Mammary epithelial cell (primary cell): ENCODE measurements at regions of chr2 and their contacts with region 1.

Region 1: DNA sequence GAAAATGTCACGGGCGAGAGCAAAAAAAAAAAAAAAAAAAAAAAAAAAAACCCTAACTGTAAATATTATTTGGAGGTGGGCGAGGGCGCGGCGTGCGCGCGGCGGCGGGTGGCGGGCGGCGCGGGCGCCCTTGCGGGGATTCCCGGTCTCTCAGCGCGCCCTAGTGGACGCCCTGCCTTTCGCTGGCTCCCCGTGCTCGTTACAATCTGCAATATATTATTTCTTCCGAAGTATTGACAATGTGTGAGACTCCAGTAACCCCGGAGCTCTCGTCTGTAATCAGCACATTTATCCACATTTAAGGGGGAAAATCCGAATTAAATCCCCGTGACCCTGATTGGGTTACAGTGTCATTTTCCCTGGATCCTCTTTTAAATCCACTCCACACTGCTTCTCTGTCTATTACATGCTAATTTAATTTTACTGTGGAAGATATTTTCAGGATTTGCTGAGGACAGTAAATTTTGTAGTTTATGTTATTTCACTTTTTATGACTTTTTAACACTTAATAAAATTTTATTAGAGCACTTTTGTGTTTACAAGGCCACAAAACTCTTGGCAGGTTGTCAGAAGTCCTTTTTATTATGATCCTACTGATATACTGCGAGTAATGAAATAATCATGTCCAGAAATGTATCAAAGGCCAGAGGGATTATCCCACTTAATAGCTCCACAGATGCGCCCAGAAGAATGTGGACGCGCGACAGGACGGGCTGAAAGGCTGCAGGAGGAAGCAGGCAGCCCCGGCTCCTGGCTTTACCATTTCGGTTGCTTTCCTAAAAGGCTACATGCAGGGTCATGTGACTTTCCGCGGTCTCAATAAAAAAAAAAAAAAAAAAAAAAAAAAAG is 369.1 kb downstream of the MTX2 start:
- DNase-seq: peak; percentile 43
- H3K4me3 ChIP-seq: peak overlapping the region; percentile 61 to 87 (median 81)
- H3K27ac ChIP-seq: peak overlapping the region; percentile 3
- H3K4me1 ChIP-seq: peaks cover 41% of the 10 kb centered on the region
- H3K27me3 ChIP-seq: peaks cover 3% of the 10 kb centered on the region
- CTCF ChIP-seq: peak; percentile 54 to 64

Region 2: GRCh38 chr2:176135034-176135440 is 503.4 kb before region 1 on chr2:
- CTCF ChIA-PET with region 1: no interaction called
- dilution Hi-C with region 1: loop called (anchors 10 kb)
- in situ Hi-C with region 1: no loop called
- intact Hi-C with region 1: loop called (anchors 1 kb)
- DNase-seq: no peak
- H3K4me3 ChIP-seq: no peak overlapping the region
- H3K27ac ChIP-seq: no peak overlapping the region
- H3K4me1 ChIP-seq: peaks cover 10% of the 10 kb centered on the region
- H3K27me3 ChIP-seq: peaks cover 59% of the 10 kb centered on the region
- CTCF ChIP-seq: peak in 1 of 2 donors; percentile 4

Region 3: GRCh38 chr2:176269319-176270099 is 368.9 kb before region 1 on chr2 and contains the start of gene MTX2:
- CTCF ChIA-PET with region 1: no interaction called
- dilution Hi-C with region 1: no loop called
- in situ Hi-C with region 1: no loop called
- intact Hi-C with region 1: loop called (anchors 1 kb)
- DNase-seq: peak; percentile 74
- H3K4me3 ChIP-seq: peak within 1 kb of the TSS; percentile 75 to 96 (median 81)
- H3K27ac ChIP-seq: peak within 1 kb of the TSS; percentile 71
- H3K4me1 ChIP-seq: peaks cover 8% of the 10 kb centered on the region
- H3K27me3 ChIP-seq: no peaks in the 10 kb centered on the region
- CTCF ChIP-seq: peak in 1 of 2 donors; percentile 33
- total RNA-seq, gene MTX2: 17.0 to 37.3 TPM

Region 4: GRCh38 chr2:176554101-176555048 is 84.0 kb before region 1 on chr2:
- CTCF ChIA-PET with region 1: interaction called, 13 read pairs
- dilution Hi-C with region 1: no loop called
- in situ Hi-C with region 1: no loop called
- intact Hi-C with region 1: loop called (anchors 1 kb)
- DNase-seq: peak; percentile 34
- H3K4me3 ChIP-seq: peak overlapping the region; percentile 49 to 54 (median 49)
- H3K27ac ChIP-seq: no peak overlapping the region
- H3K4me1 ChIP-seq: peaks cover 16% of the 10 kb centered on the region
- H3K27me3 ChIP-seq: peaks cover 8% of the 10 kb centered on the region
- CTCF ChIP-seq: peak; percentile 58 to 73

Region 5: GRCh38 chr2:176685911-176686310 is 47.5 kb after region 1 on chr2:
- CTCF ChIA-PET with region 1: no interaction called
- dilution Hi-C with region 1: no loop called
- in situ Hi-C with region 1: no loop called
- intact Hi-C with region 1: no loop called
- DNase-seq: no peak
- H3K4me3 ChIP-seq: no peak overlapping the region
- H3K27ac ChIP-seq: no peak overlapping the region
- H3K4me1 ChIP-seq: no peaks in the 10 kb centered on the region
- H3K27me3 ChIP-seq: peaks cover 3% of the 10 kb centered on the region
- CTCF ChIP-seq: no peak